CD8-positive, alpha-beta T cell (primary cell): ENCODE measurements at regions of chr15 and their contacts with region 1.

Region 1: GRCh38 chr15:90583471-90584252 is 53.9 kb downstream of the CRTC3 start:
- DNase-seq: peak in 2 of 9 experiments; percentile 42 to 49
- ATAC-seq: peak; percentile 75
- H3K4me3 ChIP-seq: no peak overlapping the region
- H3K4me3 Mint-ChIP-seq: peak overlapping the region; percentile 22
- H3K27ac ChIP-seq: no peak overlapping the region
- H3K27ac Mint-ChIP-seq: peak overlapping the region; percentile 82
- H3K4me1 ChIP-seq: peaks cover 52% of the 10 kb centered on the region
- H3K4me1 Mint-ChIP-seq: peaks cover 75% of the 10 kb centered on the region
- H3K27me3 ChIP-seq: no peaks in the 10 kb centered on the region
- H3K27me3 Mint-ChIP-seq: no peaks in the 10 kb centered on the region
- CTCF ChIP-seq: no peak

Region 2: DNA sequence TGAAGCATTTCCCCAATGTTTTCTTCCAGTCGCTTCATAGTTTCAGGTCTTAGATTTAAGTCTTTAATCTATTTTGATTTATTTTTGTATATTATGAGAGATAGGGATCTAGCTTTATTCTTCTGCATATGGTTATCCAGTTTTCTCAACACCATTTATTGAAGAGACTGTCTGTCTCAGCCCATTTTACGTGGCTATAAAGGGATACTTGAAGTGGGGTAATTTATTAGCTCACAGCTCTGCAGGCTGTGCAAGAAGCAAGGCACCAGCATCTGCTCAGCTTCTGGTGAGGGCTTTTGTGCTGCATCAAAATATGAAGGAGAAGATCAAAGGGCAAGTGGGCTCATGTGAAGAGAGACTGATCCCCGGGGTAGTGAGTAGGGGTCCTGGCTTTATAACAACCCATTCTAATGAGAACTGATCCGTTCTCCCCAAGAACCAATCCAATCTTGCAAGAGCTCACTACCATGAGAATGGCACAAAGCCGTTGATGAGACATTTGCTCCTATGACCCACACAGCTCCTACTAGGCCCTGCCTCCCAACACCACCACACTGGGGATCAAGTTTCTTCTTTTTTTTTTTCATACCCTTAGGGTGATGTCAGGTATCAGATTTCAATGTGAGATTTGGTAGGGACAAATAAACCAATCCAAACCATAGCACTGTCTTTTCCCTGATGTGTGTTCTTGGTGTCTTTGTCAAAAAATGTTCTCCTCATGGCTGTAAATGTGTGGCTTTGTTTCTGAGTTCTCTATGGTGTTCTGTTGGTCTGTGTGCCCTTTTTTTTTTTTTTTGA is 132.4 kb before region 1 on chr15:
- CTCF ChIA-PET with region 1: no interaction called
- POLR2A ChIA-PET with region 1: no interaction called
- intact Hi-C with region 1: no loop called
- DNase-seq: no peak
- ATAC-seq: no peak
- H3K4me3 ChIP-seq: no peak overlapping the region
- H3K4me3 Mint-ChIP-seq: no peak overlapping the region
- H3K27ac ChIP-seq: no peak overlapping the region
- H3K27ac Mint-ChIP-seq: no peak overlapping the region
- H3K4me1 ChIP-seq: no peaks in the 10 kb centered on the region
- H3K4me1 Mint-ChIP-seq: peaks cover 4% of the 10 kb centered on the region
- H3K27me3 ChIP-seq: no peaks in the 10 kb centered on the region
- H3K27me3 Mint-ChIP-seq: no peaks in the 10 kb centered on the region
- CTCF ChIP-seq: no peak

Region 3: DNA sequence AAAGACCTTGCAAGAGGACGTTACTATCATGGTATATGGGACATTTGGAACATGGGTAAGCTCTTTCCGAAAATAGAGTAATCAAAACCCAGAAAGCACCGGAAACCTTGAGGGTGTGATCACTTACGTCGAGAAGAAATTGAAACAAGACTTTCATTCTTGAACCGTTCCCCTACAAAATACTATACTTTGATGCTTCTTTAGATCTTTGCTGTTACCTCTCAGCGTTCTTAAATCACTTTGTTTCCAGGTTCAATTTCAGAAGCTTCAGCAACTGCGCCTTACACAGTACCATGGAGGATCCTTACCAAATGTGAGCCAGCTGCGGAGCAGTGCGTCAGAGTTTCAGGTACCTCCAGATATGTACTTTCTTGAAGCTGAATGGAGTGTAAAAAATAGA is 43.9 kb before region 1 on chr15:
- CTCF ChIA-PET with region 1: no interaction called
- POLR2A ChIA-PET with region 1: interaction called, 3 read pairs
- intact Hi-C with region 1: loop called in 1 of 2 experiments (anchors 5 kb)
- DNase-seq: peak in 4 of 9 experiments; percentile 24 to 65 (median 38)
- ATAC-seq: peak; percentile 84
- H3K4me3 ChIP-seq: peak overlapping the region in 1 of 2 experiments; percentile 30
- H3K4me3 Mint-ChIP-seq: peak overlapping the region; percentile 82
- H3K27ac ChIP-seq: peak overlapping the region; percentile 27 to 71
- H3K27ac Mint-ChIP-seq: peak overlapping the region; percentile 95
- H3K4me1 ChIP-seq: peaks cover 26% of the 10 kb centered on the region
- H3K4me1 Mint-ChIP-seq: peaks cover 79% of the 10 kb centered on the region
- H3K27me3 ChIP-seq: no peaks in the 10 kb centered on the region
- H3K27me3 Mint-ChIP-seq: no peaks in the 10 kb centered on the region
- CTCF ChIP-seq: no peak

Region 4: GRCh38 chr15:90564051-90564450 is 19.6 kb before region 1 on chr15:
- CTCF ChIA-PET with region 1: interaction called, 6 read pairs
- POLR2A ChIA-PET with region 1: no interaction called
- intact Hi-C with region 1: loop called in 1 of 2 experiments (anchors 2 kb)
- DNase-seq: peak in 2 of 9 experiments; percentile 26 to 66
- ATAC-seq: peak; percentile 47
- H3K4me3 ChIP-seq: no peak overlapping the region
- H3K4me3 Mint-ChIP-seq: peak overlapping the region; percentile 54
- H3K27ac ChIP-seq: peak overlapping the region; percentile 34 to 75
- H3K27ac Mint-ChIP-seq: peak overlapping the region; percentile 94
- H3K4me1 ChIP-seq: peaks cover 95% of the 10 kb centered on the region
- H3K4me1 Mint-ChIP-seq: peaks cover 87% of the 10 kb centered on the region
- H3K27me3 ChIP-seq: no peaks in the 10 kb centered on the region
- H3K27me3 Mint-ChIP-seq: no peaks in the 10 kb centered on the region
- CTCF ChIP-seq: no peak

Region 5: DNA sequence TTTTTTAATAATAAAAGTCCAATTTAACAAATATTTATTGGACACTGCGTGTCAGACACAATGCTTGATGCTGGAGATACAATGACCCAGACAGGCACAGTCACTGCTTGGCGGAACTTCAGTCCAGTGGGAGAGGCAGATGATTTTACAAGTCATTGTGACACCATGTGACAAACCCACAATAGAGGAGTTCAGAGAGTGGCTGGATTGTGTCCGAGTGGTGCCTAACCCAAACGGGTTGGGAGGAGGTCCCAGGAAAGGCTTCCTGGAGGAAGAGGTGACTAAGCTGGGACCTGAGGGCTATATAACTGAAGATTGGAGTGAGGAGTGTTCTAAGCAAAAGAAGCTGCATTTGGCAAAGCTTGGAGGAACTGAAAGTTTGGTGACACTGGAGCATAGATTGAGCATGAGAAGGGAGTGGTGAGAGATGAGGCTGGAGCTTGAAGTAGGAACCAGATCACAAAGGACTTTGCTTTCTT is 12.6 kb before region 1 on chr15:
- CTCF ChIA-PET with region 1: interaction called, 7 read pairs
- POLR2A ChIA-PET with region 1: interaction called, 9 read pairs
- intact Hi-C with region 1: loop called in 1 of 2 experiments (anchors 1 kb)
- DNase-seq: peak in 1 of 9 experiments; percentile 38
- ATAC-seq: no peak
- H3K4me3 ChIP-seq: peak overlapping the region in 1 of 2 experiments; percentile 12
- H3K4me3 Mint-ChIP-seq: peak overlapping the region; percentile 16
- H3K27ac ChIP-seq: peak overlapping the region in 1 of 2 experiments; percentile 55
- H3K27ac Mint-ChIP-seq: peak overlapping the region; percentile 2
- H3K4me1 ChIP-seq: peaks cover 94% of the 10 kb centered on the region
- H3K4me1 Mint-ChIP-seq: peaks cover 81% of the 10 kb centered on the region
- H3K27me3 ChIP-seq: no peaks in the 10 kb centered on the region
- H3K27me3 Mint-ChIP-seq: no peaks in the 10 kb centered on the region
- CTCF ChIP-seq: no peak

Region 6: DNA sequence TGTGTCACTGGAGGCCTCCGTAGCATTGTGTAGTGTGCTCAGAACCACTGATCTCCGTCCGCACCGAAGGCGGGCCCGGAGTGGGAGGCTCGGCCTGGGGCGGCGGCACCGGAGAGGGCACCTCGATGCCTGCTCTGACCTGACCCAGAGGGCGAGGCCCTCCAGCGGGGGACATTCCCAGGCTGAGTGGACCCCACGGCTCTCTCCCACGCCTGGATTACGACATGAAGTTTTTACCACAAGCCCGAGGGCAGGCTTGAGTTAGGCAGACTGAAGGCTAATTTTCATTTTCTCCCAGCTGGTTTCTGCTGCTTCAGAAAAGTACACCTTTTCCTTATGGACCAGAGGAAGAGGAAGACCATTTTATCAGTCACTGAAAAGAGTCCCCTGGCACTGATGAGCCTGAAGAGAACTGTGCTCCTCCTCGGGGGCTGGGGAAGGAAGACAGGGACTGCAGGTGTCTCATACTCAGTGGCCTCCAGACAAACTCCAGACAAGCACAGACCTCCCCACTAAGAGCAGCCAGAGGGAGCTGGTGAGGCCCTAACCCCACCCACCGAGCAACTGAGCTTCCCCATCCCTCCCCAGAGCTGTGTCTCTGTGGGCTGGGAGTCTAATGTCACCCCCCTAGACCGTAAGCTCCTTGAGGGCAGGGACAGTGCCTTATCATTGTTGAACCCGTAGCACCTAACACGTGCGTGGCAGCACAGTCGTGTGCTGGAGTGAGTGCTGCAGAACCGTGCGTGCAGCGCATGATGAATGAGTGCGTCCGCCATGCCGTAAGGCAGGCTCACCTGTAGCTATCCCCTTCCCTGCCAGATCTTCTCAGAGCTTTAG is 59.0 kb after region 1 on chr15:
- CTCF ChIA-PET with region 1: no interaction called
- POLR2A ChIA-PET with region 1: no interaction called
- intact Hi-C with region 1: no loop called
- DNase-seq: no peak
- ATAC-seq: no peak
- H3K4me3 ChIP-seq: no peak overlapping the region
- H3K4me3 Mint-ChIP-seq: no peak overlapping the region
- H3K27ac ChIP-seq: no peak overlapping the region
- H3K27ac Mint-ChIP-seq: no peak overlapping the region
- H3K4me1 ChIP-seq: peaks cover 1% of the 10 kb centered on the region
- H3K4me1 Mint-ChIP-seq: peaks cover 2% of the 10 kb centered on the region
- H3K27me3 ChIP-seq: no peaks in the 10 kb centered on the region
- H3K27me3 Mint-ChIP-seq: no peaks in the 10 kb centered on the region
- CTCF ChIP-seq: no peak